ENCODE measurements at regions of chr16 and their contacts with region 1.

Region 1: GRCh38 chr16:66740010-66740409 is 11.4 kb downstream of the DYNC1LI2 start:
- DNase-seq: peak in 1 of 2 experiments; percentile 29
- H3K4me3 ChIP-seq: no peak overlapping the region
- H3K4me3 Mint-ChIP-seq: no peak overlapping the region
- H3K27ac Mint-ChIP-seq: peak overlapping the region; percentile 39
- H3K4me1 ChIP-seq: peaks cover 9% of the 10 kb centered on the region
- H3K4me1 Mint-ChIP-seq: peaks cover 8% of the 10 kb centered on the region
- H3K27me3 ChIP-seq: no peaks in the 10 kb centered on the region
- H3K27me3 Mint-ChIP-seq: no peaks in the 10 kb centered on the region
- CTCF ChIP-seq: peak; percentile 64 to 66

Region 2: DNA sequence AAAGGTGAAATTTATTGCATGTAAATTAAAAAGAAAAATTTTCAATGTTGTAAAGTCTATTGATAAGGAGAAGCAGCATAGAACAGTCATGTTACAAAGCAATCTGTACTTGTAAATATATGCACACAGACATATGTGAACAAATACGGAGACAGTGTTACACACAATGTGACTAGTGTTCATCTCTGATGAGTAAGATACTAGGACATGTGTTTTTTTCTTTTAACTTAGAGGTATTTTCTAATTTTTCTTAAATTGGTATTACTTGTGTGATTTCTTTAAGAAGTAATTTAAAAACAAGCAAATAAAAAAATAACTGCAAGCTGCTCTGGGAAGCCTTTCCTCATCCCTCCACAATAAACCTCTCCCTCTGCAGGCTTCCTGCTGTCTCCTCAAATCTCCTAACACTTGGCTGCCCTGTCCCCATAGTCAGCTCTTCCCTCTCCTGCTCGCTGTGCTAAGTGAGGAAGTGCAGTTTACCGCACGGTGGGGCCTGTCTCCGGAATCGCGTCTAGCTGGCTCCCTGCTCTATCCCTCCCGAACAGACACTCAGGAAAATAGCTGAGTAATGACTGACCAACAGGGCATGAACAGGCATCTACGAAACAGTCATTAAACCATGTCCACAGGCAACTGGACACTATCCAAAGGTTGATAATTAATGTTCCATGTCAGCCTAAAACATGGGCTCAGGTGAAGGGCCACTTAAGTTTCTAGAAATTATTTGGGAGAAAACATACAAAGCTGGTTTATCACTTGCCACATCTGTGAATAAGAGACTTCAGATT is 79.4 kb before region 1 on chr16:
- CTCF ChIA-PET with region 1: no interaction called
- POLR2A ChIA-PET with region 1: no interaction called
- intact Hi-C with region 1: loop called (anchors 1 kb)
- DNase-seq: no peak
- H3K4me3 ChIP-seq: no peak overlapping the region
- H3K4me3 Mint-ChIP-seq: no peak overlapping the region
- H3K27ac Mint-ChIP-seq: no peak overlapping the region
- H3K4me1 ChIP-seq: no peaks in the 10 kb centered on the region
- H3K4me1 Mint-ChIP-seq: peaks cover 6% of the 10 kb centered on the region
- H3K27me3 ChIP-seq: no peaks in the 10 kb centered on the region
- H3K27me3 Mint-ChIP-seq: no peaks in the 10 kb centered on the region
- CTCF ChIP-seq: no peak

Region 3: DNA sequence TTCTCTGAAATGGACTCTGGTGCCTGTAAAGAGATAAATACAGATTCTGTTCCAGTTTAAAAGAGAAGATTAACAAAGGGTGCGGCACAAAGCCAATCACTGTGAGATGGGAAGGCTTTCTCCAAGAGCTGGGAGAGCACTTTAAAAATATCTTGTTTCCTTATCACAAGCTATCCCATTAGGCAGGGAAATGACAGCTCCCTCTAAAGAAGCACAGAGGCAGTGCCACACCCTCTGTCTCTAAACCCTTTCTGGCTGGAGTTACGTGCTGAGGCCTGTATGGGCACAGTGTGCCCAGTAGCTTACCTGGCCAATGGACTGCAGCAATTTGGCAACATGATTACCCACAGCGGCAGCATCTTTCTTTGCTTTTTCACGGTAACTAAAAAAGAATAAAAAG is 70.4 kb after region 1 on chr16:
- CTCF ChIA-PET with region 1: interaction called, 10 read pairs
- POLR2A ChIA-PET with region 1: no interaction called
- intact Hi-C with region 1: no loop called
- DNase-seq: no peak
- H3K4me3 ChIP-seq: no peak overlapping the region
- H3K4me3 Mint-ChIP-seq: no peak overlapping the region
- H3K27ac Mint-ChIP-seq: no peak overlapping the region
- H3K4me1 ChIP-seq: no peaks in the 10 kb centered on the region
- H3K4me1 Mint-ChIP-seq: no peaks in the 10 kb centered on the region
- H3K27me3 ChIP-seq: no peaks in the 10 kb centered on the region
- H3K27me3 Mint-ChIP-seq: no peaks in the 10 kb centered on the region
- CTCF ChIP-seq: no peak

Measured in Caco-2 (cell line).